ENCODE measurements at regions of chr3 and their contacts with region 1.

Region 1: DNA sequence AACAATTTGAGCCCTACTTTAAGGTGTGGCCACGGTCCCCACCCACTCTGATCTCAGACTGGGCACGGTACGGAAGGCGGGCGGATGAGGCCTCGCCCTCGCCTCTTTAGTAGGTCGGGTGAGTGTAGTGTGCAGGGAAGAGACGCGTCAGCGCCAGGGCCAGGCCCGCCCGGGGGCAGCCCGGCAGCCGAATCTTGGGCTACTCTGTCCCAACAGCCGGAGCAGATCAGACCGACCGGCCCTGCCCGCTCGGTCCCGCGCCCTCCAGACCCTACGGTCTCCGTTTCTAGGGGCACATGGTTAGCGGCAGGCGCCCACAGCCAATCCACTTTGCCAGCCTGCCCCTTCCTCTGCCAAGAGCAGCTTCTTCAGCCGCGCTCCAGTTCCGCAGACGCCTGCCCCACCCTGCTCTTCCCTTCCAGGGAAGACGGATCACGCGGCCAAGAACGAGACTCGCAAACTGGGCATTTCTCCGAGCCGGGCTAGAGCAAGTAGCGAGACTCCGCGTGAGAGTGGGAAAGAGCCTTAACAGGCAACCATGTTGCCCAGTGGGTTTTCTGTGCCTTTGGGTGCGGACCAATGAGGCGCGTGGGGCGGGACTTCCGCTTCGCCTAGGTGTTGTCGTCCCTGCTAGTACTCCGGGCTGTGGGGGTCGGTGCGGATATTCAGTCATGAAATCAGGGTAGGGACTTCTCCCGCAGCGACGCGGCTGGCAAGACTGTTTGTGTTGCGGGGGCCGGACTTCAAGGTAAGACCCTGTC is at the start of gene RNF13:
- DNase-seq: peak; percentile 93
- ATAC-seq: peak; percentile 89
- H3K4me3 ChIP-seq: peak within 1 kb of the TSS; percentile 68 to 99 (median 94)
- H3K4me3 Mint-ChIP-seq: peak within 1 kb of the TSS; percentile 99
- H3K27ac ChIP-seq: peak within 1 kb of the TSS; percentile 94
- H3K27ac Mint-ChIP-seq: peak within 1 kb of the TSS; percentile 100
- H3K4me1 ChIP-seq: peaks cover 39 to 45% of the 10 kb centered on the region in 2 donors
- H3K4me1 Mint-ChIP-seq: peaks cover 51% of the 10 kb centered on the region
- H3K27me3 ChIP-seq: no peaks in the 10 kb centered on the region
- H3K27me3 Mint-ChIP-seq: peaks cover 3% of the 10 kb centered on the region
- CTCF ChIP-seq: no peak
- total RNA-seq, gene RNF13: 86.5 and 92.8 TPM in 2 replicates

Region 2: DNA sequence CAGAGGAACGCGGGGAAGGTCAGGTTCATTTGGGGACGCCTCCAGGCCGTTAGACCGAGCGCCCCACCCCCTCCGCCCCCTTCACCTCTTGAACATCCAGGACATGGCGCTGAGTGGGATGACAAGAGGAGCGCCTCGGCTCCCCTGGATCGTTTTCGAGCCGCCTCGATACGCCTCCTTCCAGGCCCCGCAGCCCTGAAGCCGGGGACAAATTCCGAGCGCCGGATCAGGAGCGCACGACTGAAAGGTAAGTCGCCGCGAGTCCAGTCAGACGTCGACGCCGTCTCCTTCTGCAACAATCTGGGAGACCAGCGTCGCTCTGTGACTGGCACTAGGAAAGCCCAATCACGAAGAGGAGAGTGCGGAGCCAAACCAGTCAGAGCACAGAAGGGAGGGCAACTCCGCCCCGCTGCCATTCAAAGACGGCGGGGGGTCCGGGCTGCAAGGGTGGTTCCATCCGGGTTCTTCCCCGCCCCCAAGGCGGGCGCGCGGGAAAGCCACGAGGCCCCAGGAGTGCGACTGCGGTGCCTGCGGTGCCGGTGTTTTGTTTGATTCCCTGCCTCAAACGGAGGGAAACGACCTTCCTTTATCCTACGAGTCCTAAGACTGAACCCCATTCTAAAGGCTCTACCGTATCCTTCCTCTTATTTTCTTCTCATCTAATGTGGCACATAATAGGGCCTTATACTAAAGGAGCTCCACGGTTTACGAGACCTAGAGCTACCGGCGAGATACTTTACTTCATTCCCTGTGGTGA is 726.4 kb before region 1 on chr3 and contains the start of gene HLTF:
- CTCF ChIA-PET with region 1: no interaction called
- POLR2A ChIA-PET with region 1: no interaction called
- intact Hi-C with region 1: loop called (anchors 5 kb)
- DNase-seq: peak; percentile 93
- ATAC-seq: peak; percentile 99
- H3K4me3 ChIP-seq: peak within 1 kb of the TSS; percentile 65 to 95 (median 86)
- H3K4me3 Mint-ChIP-seq: peak within 1 kb of the TSS; percentile 91
- H3K27ac ChIP-seq: peak within 1 kb of the TSS in 1 of 2 donors; percentile 38
- H3K27ac Mint-ChIP-seq: peak within 1 kb of the TSS; percentile 87
- H3K4me1 ChIP-seq: peaks cover 10 to 14% of the 10 kb centered on the region in 2 donors
- H3K4me1 Mint-ChIP-seq: peaks cover 25% of the 10 kb centered on the region
- H3K27me3 ChIP-seq: no peaks in the 10 kb centered on the region
- H3K27me3 Mint-ChIP-seq: no peaks in the 10 kb centered on the region
- CTCF ChIP-seq: no peak
- total RNA-seq, gene HLTF: 19.1 and 22.9 TPM in 2 replicates

Region 3: GRCh38 chr3:149575961-149576564 is 236.7 kb before region 1 on chr3:
- CTCF ChIA-PET with region 1: no interaction called
- POLR2A ChIA-PET with region 1: no interaction called
- intact Hi-C with region 1: no loop called
- DNase-seq: no peak
- ATAC-seq: no peak
- H3K4me3 ChIP-seq: no peak overlapping the region
- H3K4me3 Mint-ChIP-seq: no peak overlapping the region
- H3K27ac ChIP-seq: no peak overlapping the region
- H3K27ac Mint-ChIP-seq: no peak overlapping the region
- H3K4me1 ChIP-seq: no peaks in the 10 kb centered on the region
- H3K4me1 Mint-ChIP-seq: no peaks in the 10 kb centered on the region
- H3K27me3 ChIP-seq: no peaks in the 10 kb centered on the region
- H3K27me3 Mint-ChIP-seq: no peaks in the 10 kb centered on the region
- CTCF ChIP-seq: no peak

Region 4: DNA sequence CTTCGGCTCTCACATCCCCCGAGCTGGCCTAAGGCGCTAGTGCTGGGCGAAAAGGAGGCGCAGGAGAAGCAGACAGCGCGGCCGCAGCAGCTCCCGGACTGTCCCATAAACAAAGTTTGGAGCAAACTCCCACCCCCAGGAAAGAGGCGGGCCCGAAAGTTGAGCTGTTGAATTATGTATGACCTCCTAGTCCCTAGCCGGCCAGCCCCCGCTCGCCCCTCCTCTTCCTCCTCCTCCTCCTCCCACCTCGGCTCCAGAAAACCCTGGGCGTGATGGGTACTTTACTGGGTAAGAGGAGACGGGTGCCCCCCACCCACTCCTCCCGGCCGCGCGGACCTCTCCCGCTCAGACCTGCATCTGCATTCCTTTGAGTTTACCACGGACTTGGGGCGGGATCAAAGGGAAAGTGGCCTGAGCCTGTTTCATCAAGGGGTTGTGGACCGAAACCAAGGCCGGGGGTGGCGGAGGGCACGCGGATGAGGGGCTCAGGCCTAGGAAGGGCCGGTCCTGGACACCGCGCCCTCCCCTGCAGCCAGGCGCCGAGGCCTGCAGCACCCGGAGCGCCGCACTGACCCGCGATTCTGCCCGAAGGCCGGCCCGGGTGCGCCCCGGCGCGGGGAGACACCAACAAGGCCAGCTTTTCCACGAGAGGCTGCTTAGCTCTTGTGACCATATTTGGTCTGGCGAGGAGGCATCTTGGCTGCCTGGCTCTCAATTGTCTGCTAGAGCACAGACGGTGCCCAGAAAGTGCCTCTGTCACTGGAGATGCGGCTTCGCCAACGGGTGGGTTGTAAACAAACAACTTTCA is 154.7 kb before region 1 on chr3 and contains the start of gene WWTR1:
- CTCF ChIA-PET with region 1: no interaction called
- POLR2A ChIA-PET with region 1: no interaction called
- intact Hi-C with region 1: no loop called
- DNase-seq: peak; percentile 41
- ATAC-seq: peak; percentile 53
- H3K4me3 ChIP-seq: peak within 1 kb of the TSS; percentile 28 to 77 (median 63)
- H3K4me3 Mint-ChIP-seq: peak within 1 kb of the TSS; percentile 92
- H3K27ac ChIP-seq: peak within 1 kb of the TSS in 1 of 2 donors; percentile 43
- H3K27ac Mint-ChIP-seq: peak within 1 kb of the TSS; percentile 62
- H3K4me1 ChIP-seq: peaks cover 21 to 22% of the 10 kb centered on the region in 2 donors
- H3K4me1 Mint-ChIP-seq: peaks cover 14% of the 10 kb centered on the region
- H3K27me3 ChIP-seq: peaks cover 0 to 47% (median 15%) of the 10 kb centered on the region in 4 experiments
- H3K27me3 Mint-ChIP-seq: peaks cover 57% of the 10 kb centered on the region
- CTCF ChIP-seq: no peak
- total RNA-seq, gene WWTR1: 0.92 and 2.3 TPM in 2 replicates

Region 5: DNA sequence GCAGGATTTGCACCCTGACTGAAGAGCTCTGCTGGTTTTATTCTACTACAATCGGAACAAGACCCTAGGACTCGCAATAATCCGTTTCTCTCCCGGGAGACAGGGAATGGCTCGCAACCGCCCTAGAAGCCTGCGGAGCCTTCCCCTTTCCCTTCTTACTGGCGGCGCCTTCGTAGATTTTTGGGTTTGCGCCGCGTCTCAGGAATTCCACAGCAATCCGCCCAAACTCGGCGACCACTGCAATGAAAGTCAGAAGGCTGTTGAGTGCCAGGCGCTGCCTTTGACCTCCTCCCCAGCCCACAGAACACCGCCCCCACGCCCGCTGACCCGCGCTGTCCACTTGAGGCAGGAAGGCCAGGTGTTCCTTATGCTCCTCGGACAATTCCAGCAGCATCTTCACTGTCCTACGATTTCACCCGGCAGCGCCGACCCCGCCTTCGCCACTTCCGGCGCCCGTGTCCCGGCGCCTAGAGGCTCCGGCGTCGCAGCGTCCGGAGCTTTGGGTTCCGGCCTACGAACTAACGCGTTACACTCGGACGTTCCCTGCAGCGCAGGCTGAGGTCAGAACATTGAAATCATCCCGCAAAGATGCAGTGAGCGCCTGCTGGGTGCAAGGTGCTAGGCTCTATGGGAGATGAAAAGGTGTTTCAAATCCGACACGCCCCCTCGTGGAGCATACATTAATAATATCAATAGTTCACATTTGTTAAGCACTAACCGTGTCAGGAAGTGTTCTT is 60.6 kb before region 1 on chr3 and contains the start of gene COMMD2:
- CTCF ChIA-PET with region 1: interaction called, 17 read pairs
- POLR2A ChIA-PET with region 1: interaction called, 3 read pairs
- intact Hi-C with region 1: loop called (anchors 1 kb)
- DNase-seq: peak; percentile 86
- ATAC-seq: peak; percentile 95
- H3K4me3 ChIP-seq: peak within 1 kb of the TSS; percentile 69 to 92 (median 83)
- H3K4me3 Mint-ChIP-seq: peak within 1 kb of the TSS; percentile 98
- H3K27ac ChIP-seq: peak within 1 kb of the TSS; percentile 65 to 84
- H3K27ac Mint-ChIP-seq: peak within 1 kb of the TSS; percentile 96
- H3K4me1 ChIP-seq: peaks cover 11 to 15% of the 10 kb centered on the region in 2 donors
- H3K4me1 Mint-ChIP-seq: peaks cover 27% of the 10 kb centered on the region
- H3K27me3 ChIP-seq: no peaks in the 10 kb centered on the region
- H3K27me3 Mint-ChIP-seq: peaks cover 5% of the 10 kb centered on the region
- CTCF ChIP-seq: peak; percentile 68
- total RNA-seq, gene COMMD2: 45.1 and 47.8 TPM in 2 replicates

Region 6: GRCh38 chr3:149771652-149772271 is 41.0 kb before region 1 on chr3:
- CTCF ChIA-PET with region 1: interaction called, 307 read pairs
- POLR2A ChIA-PET with region 1: no interaction called
- intact Hi-C with region 1: loop called (anchors 1 kb)
- DNase-seq: peak; percentile 48
- ATAC-seq: peak; percentile 51
- H3K4me3 ChIP-seq: no peak overlapping the region
- H3K4me3 Mint-ChIP-seq: no peak overlapping the region
- H3K27ac ChIP-seq: no peak overlapping the region
- H3K27ac Mint-ChIP-seq: no peak overlapping the region
- H3K4me1 ChIP-seq: no peaks in the 10 kb centered on the region
- H3K4me1 Mint-ChIP-seq: no peaks in the 10 kb centered on the region
- H3K27me3 ChIP-seq: no peaks in the 10 kb centered on the region
- H3K27me3 Mint-ChIP-seq: peaks cover 15% of the 10 kb centered on the region
- CTCF ChIP-seq: peak; percentile 75

Region 7: GRCh38 chr3:149792452-149793270 is 20.1 kb before region 1 on chr3 and contains the start of gene ANKUB1:
- CTCF ChIA-PET with region 1: interaction called, 20 read pairs
- POLR2A ChIA-PET with region 1: no interaction called
- intact Hi-C with region 1: no loop called
- DNase-seq: no peak
- ATAC-seq: no peak
- H3K4me3 ChIP-seq: no peak within 1 kb of the TSS
- H3K4me3 Mint-ChIP-seq: no peak within 1 kb of the TSS
- H3K27ac ChIP-seq: no peak within 1 kb of the TSS
- H3K27ac Mint-ChIP-seq: no peak within 1 kb of the TSS
- H3K4me1 ChIP-seq: no peaks in the 10 kb centered on the region
- H3K4me1 Mint-ChIP-seq: no peaks in the 10 kb centered on the region
- H3K27me3 ChIP-seq: peaks cover 0 to 14% (median 6%) of the 10 kb centered on the region in 4 experiments
- H3K27me3 Mint-ChIP-seq: peaks cover 25% of the 10 kb centered on the region
- CTCF ChIP-seq: no peak
- total RNA-seq, gene ANKUB1: not detected in 2 replicates

Region 8: DNA sequence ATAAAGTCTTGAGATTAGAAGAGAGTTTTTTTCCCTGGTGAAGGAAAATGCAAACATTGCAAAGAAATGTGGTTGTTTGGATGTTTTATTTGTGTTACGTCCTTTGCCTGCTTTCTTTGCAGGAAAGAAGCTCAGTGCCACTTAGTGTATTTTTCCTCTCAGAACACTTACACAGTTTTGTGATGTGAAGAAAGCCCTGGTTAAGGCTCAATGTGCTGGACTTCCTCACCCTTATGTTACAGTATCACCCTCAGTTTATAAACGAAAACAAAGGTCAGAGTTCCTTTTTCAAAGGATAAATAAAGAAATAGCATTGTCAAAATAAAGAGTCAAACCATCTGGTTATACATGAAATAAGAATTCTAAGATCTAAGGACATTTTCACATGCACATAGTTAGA is 46.1 kb after region 1 on chr3:
- CTCF ChIA-PET with region 1: no interaction called
- POLR2A ChIA-PET with region 1: no interaction called
- intact Hi-C with region 1: loop called (anchors 5 kb)
- DNase-seq: no peak
- ATAC-seq: no peak
- H3K4me3 ChIP-seq: no peak overlapping the region
- H3K4me3 Mint-ChIP-seq: no peak overlapping the region
- H3K27ac ChIP-seq: no peak overlapping the region
- H3K27ac Mint-ChIP-seq: no peak overlapping the region
- H3K4me1 ChIP-seq: no peaks in the 10 kb centered on the region
- H3K4me1 Mint-ChIP-seq: peaks cover 7% of the 10 kb centered on the region
- H3K27me3 ChIP-seq: no peaks in the 10 kb centered on the region
- H3K27me3 Mint-ChIP-seq: no peaks in the 10 kb centered on the region
- CTCF ChIP-seq: no peak

Measured in B cell (primary cell).